HEK293 (cell line): ENCODE measurements at regions of chr11 and their contacts with region 1.

Region 1: GRCh38 chr11:45872513-45873356 is 12.7 kb upstream of the MAPK8IP1 start:
- H3K4me3 ChIP-seq: no peak overlapping the region
- H3K27ac ChIP-seq: no peak overlapping the region
- H3K4me1 ChIP-seq: no peaks in the 10 kb centered on the region
- CTCF ChIP-seq: peak; percentile 87

Region 2: GRCh38 chr11:45857961-45858474 is 14.7 kb before region 1 on chr11:
- CTCF ChIA-PET with region 1: interaction called, 41 read pairs
- POLR2A ChIA-PET with region 1: interaction called, 3 read pairs
- H3K4me3 ChIP-seq: no peak overlapping the region
- H3K27ac ChIP-seq: no peak overlapping the region
- H3K4me1 ChIP-seq: no peaks in the 10 kb centered on the region
- CTCF ChIP-seq: no peak

Region 3: DNA sequence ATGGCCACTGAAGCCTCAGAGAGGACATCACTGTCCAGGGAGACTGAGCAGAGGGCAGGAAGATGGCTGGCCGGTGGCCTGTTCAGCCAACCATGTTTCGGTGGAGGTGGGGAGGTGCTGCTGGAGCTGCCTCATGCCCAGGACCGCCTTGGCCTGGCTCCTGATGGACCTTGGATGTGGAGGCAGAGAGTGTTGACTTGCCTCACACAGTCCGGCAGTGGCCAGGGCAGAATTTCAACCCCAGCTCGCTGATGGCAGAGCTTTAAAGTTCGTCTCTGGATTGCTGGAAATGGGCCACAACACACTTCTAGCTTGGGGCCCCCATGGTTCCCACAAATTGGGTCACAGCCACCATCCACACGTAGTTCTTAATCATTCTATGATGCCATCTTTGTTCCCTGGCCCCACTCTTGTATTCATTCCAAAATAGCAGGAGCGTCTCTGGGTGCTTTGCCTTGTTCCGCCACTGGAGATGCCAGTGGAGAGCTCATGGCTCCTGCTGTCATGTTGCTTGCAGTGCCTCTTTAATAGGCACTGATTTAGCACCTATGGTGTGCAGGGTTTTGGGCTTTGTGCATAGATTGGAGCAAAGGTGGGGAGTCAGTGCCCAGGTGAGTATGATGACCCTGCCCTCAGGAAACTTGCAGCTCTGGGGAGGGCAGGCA is 18.3 kb after region 1 on chr11:
- CTCF ChIA-PET with region 1: interaction called, 18 read pairs
- POLR2A ChIA-PET with region 1: interaction called, 3 read pairs
- H3K4me3 ChIP-seq: no peak overlapping the region
- H3K27ac ChIP-seq: no peak overlapping the region
- H3K4me1 ChIP-seq: no peaks in the 10 kb centered on the region
- CTCF ChIP-seq: no peak

Region 4: GRCh38 chr11:45917623-45918330 is 45.0 kb after region 1 on chr11 and contains the start of gene PEX16:
- CTCF ChIA-PET with region 1: interaction called, 6 read pairs
- POLR2A ChIA-PET with region 1: interaction called, 10 read pairs
- H3K4me3 ChIP-seq: peak within 1 kb of the TSS; percentile 96
- H3K27ac ChIP-seq: peak within 1 kb of the TSS; percentile 46
- H3K4me1 ChIP-seq: no peaks in the 10 kb centered on the region; the same call in 1 of the 2 replicates
- CTCF ChIP-seq: no peak

Region 5: GRCh38 chr11:45964911-45965389 is 92.2 kb after region 1 on chr11:
- CTCF ChIA-PET with region 1: interaction called, 27 read pairs
- POLR2A ChIA-PET with region 1: no interaction called
- H3K4me3 ChIP-seq: no peak overlapping the region
- H3K27ac ChIP-seq: no peak overlapping the region
- H3K4me1 ChIP-seq: no peaks in the 10 kb centered on the region
- CTCF ChIP-seq: peak; percentile 67